Activated CD4-positive, alpha-beta T cell treated with anti-CD3 and anti-CD28 coated beads for 36 hours (primary cell): ENCODE measurements at regions of chr3 and their contacts with region 1.

Region 1: GRCh38 chr3:128794770-128795649 is 69.0 kb downstream of the RAB7A start:
- DNase-seq: peak; percentile 76
- ATAC-seq: peak; percentile 68
- H3K4me3 Mint-ChIP-seq: peak overlapping the region; percentile 37
- H3K27ac Mint-ChIP-seq: peak overlapping the region; percentile 95
- H3K4me1 Mint-ChIP-seq: peaks cover 91% of the 10 kb centered on the region
- H3K27me3 Mint-ChIP-seq: no peaks in the 10 kb centered on the region

Region 2: GRCh38 chr3:128698211-128699064 is 96.6 kb before region 1 on chr3:
- CTCF ChIA-PET with region 1: no interaction called
- POLR2A ChIA-PET with region 1: no interaction called
- intact Hi-C with region 1: no loop called
- DNase-seq: peak; percentile 44
- ATAC-seq: peak; percentile 71
- H3K4me3 Mint-ChIP-seq: peak overlapping the region; percentile 59
- H3K27ac Mint-ChIP-seq: no peak overlapping the region
- H3K4me1 Mint-ChIP-seq: peaks cover 2% of the 10 kb centered on the region
- H3K27me3 Mint-ChIP-seq: no peaks in the 10 kb centered on the region

Region 3: DNA sequence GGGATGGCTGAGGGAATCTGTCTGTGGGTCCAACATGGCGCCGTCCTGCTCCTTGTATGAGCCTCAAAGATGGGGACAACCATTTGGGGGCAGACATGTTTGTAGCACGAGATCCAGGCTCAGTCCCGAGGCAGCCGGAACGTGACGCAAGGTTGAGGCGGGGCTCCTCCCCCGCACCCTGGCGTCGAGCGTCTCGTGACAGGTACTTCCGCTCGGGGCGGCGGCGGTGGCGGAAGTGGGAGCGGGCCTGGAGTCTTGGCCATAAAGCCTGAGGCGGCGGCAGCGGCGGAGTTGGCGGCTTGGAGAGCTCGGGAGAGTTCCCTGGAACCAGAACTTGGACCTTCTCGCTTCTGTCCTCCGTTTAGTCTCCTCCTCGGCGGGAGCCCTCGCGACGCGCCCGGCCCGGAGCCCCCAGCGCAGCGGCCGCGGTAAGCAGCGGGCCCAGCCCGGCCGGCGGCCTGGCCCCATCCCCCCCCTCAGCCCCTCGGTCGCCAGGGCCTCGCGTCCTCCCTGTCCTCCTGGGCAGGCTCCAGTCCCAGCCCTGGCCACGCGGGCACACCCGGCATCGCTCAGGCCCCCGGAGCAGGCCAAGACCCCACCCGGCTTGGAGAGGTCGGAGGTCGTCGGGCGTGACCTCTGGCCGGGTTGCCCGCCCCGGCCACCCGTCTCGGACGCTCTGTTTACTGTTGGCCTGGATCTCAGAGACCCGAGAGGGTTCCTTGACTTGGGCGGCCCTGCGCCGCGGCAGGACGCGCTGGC is 68.9 kb before region 1 on chr3 and contains the start of gene RAB7A:
- CTCF ChIA-PET with region 1: interaction called, 29 read pairs
- POLR2A ChIA-PET with region 1: no interaction called
- intact Hi-C with region 1: loop called in 1 of 2 experiments (anchors 5 kb)
- DNase-seq: peak; percentile 99
- ATAC-seq: peak; percentile 92
- H3K4me3 Mint-ChIP-seq: peak within 1 kb of the TSS; percentile 89
- H3K27ac Mint-ChIP-seq: peak within 1 kb of the TSS; percentile 92
- H3K4me1 Mint-ChIP-seq: peaks cover 52% of the 10 kb centered on the region
- H3K27me3 Mint-ChIP-seq: no peaks in the 10 kb centered on the region
- total RNA-seq, gene RAB7A: 297 to 534 TPM

Region 4: DNA sequence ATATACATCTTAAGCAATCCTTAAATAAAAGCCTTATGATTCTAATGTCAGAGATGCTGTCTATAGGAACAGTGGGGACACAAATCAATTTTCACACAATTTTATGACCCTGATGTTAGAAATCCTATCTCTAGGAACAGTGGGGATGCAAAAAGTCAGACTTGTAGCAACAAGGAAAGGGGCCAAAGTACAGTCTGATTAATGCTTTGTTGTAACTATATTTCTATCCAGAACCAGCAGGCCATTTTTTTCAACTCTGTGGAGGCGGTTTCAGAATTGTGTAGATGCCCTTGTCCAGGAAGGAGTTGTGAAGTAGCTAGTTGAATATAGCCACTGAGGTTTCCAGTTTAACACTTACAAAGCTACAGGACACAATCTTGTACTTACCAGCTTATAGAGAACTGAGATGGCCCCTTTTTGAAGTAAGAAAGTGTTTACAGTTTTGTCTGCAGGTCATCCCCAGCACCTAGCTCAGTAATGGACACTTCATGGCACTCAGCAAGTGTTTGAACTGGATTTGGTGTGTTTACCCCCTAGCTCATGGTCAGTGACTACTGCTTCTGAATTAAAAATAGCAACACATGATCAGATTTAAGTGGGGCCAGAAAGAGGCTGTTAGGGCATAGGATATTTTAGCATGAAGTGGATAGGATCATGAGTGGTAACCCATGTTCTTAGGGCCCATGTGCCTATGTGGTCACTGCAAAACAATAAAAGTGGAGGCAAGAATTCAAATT is 14.7 kb before region 1 on chr3:
- CTCF ChIA-PET with region 1: interaction called, 80 read pairs
- POLR2A ChIA-PET with region 1: no interaction called
- intact Hi-C with region 1: no loop called
- DNase-seq: no peak
- ATAC-seq: no peak
- H3K4me3 Mint-ChIP-seq: no peak overlapping the region
- H3K27ac Mint-ChIP-seq: peak overlapping the region; percentile 59
- H3K4me1 Mint-ChIP-seq: peaks cover 83% of the 10 kb centered on the region
- H3K27me3 Mint-ChIP-seq: no peaks in the 10 kb centered on the region